Naive thymus-derived CD4-positive, alpha-beta T cell (primary cell): ENCODE measurements at regions of chr12 and their contacts with region 1.

Region 1: GRCh38 chr12:8078398-8078797 is 3.7 kb upstream of the NECAP1 start:
- DNase-seq: peak in 8 of 9 donors; percentile 36 to 82 (median 78)
- ATAC-seq: peak; percentile 45
- H3K4me3 ChIP-seq: no peak overlapping the region
- H3K4me3 Mint-ChIP-seq: peak overlapping the region in 6 of 10 donors; percentile 18 to 49 (median 30)
- H3K27ac ChIP-seq: peak overlapping the region; percentile 94
- H3K27ac Mint-ChIP-seq: peak overlapping the region in 8 of 9 donors; percentile 86 to 100 (median 98)
- H3K4me1 ChIP-seq: peaks cover 21 to 40% of the 10 kb centered on the region in 2 donors
- H3K4me1 Mint-ChIP-seq: peaks cover 19 to 63% (median 41%) of the 10 kb centered on the region in 7 donors
- H3K27me3 ChIP-seq: no peaks in the 10 kb centered on the region
- H3K27me3 Mint-ChIP-seq: peaks cover 0 to 2% (median 0%) of the 10 kb centered on the region in 5 donors

Region 2: GRCh38 chr12:7354529-7354928 is 723.9 kb before region 1 on chr12:
- CTCF ChIA-PET with region 1: no interaction called
- POLR2A ChIA-PET with region 1: no interaction called
- intact Hi-C with region 1: no loop called
- DNase-seq: no peak
- ATAC-seq: no peak
- H3K4me3 ChIP-seq: no peak overlapping the region
- H3K4me3 Mint-ChIP-seq: no peak overlapping the region
- H3K27ac ChIP-seq: no peak overlapping the region
- H3K27ac Mint-ChIP-seq: no peak overlapping the region
- H3K4me1 ChIP-seq: peaks cover 0 to 19% of the 10 kb centered on the region in 2 donors
- H3K4me1 Mint-ChIP-seq: peaks cover 0 to 6% (median 5%) of the 10 kb centered on the region in 7 donors
- H3K27me3 ChIP-seq: no peaks in the 10 kb centered on the region
- H3K27me3 Mint-ChIP-seq: peaks cover 9 to 31% (median 14%) of the 10 kb centered on the region in 5 donors

Region 3: GRCh38 chr12:7859552-7859951 is 218.8 kb before region 1 on chr12:
- CTCF ChIA-PET with region 1: interaction called, 12 read pairs
- POLR2A ChIA-PET with region 1: interaction called, 5 read pairs
- intact Hi-C with region 1: loop called (anchors 1 kb)
- DNase-seq: no peak
- ATAC-seq: no peak
- H3K4me3 ChIP-seq: no peak overlapping the region
- H3K4me3 Mint-ChIP-seq: no peak overlapping the region
- H3K27ac ChIP-seq: no peak overlapping the region
- H3K27ac Mint-ChIP-seq: peak overlapping the region in 2 of 9 donors; percentile 4 to 26
- H3K4me1 ChIP-seq: peaks cover 0 to 4% of the 10 kb centered on the region in 2 donors
- H3K4me1 Mint-ChIP-seq: peaks cover 0 to 18% (median 8%) of the 10 kb centered on the region in 7 donors
- H3K27me3 ChIP-seq: no peaks in the 10 kb centered on the region
- H3K27me3 Mint-ChIP-seq: peaks cover 0 to 18% (median 0%) of the 10 kb centered on the region in 5 donors

Region 4: DNA sequence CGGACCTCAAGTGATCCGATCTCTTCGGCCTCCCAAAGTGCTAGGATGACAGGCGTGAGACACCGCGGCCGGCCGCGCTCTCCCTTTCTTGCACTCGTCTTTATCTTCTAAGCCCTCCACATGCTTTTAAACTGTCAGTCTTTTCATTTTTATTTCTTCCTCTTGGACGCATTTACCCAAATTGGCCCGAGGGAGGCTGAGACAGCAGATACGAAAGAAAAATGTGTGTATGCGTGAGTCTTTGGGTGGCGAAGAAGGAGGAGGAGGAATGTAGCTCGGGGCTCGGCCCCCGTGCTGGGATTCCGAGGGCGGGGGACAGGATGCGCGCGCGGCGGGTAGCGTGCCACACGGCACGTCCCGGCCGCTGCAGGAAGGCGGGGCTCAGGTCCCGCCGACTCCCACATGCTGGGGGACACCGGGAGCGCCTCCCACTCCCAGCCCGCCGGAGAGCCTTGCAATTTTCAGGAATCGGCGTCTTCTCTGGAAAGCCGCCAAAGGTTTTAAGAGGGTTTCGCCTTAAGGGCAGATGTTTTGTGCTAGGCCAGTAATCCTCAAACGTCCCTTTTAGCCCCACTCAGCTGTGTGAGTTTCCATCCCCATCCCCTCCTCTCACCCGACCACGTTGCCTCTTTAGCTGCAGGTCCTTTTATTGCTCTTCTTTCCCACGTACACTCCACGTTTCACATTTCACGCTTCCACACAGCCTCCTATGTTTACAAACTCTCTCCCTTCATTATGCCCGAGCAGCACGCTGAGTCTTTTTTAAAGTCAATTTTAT is 107.7 kb before region 1 on chr12:
- CTCF ChIA-PET with region 1: interaction called, 3 read pairs
- POLR2A ChIA-PET with region 1: interaction called, 7 read pairs
- intact Hi-C with region 1: loop called in 1 of 2 experiments (anchors 1 kb)
- DNase-seq: peak; percentile 68 to 91 (median 85)
- ATAC-seq: peak; percentile 93
- H3K4me3 ChIP-seq: peak overlapping the region; percentile 75
- H3K4me3 Mint-ChIP-seq: peak overlapping the region; percentile 82 to 96 (median 90)
- H3K27ac ChIP-seq: peak overlapping the region; percentile 99
- H3K27ac Mint-ChIP-seq: peak overlapping the region; percentile 92 to 99 (median 98)
- H3K4me1 ChIP-seq: peaks cover 13 to 14% of the 10 kb centered on the region in 2 donors
- H3K4me1 Mint-ChIP-seq: peaks cover 17 to 37% (median 33%) of the 10 kb centered on the region in 7 donors
- H3K27me3 ChIP-seq: no peaks in the 10 kb centered on the region
- H3K27me3 Mint-ChIP-seq: no peaks in the 10 kb centered on the region

Region 5: GRCh38 chr12:8026291-8026900 is 52.0 kb before region 1 on chr12:
- CTCF ChIA-PET with region 1: interaction called, 9 read pairs
- POLR2A ChIA-PET with region 1: interaction called, 178 read pairs
- intact Hi-C with region 1: loop called (anchors 1 kb)
- DNase-seq: peak; percentile 74 to 99 (median 98)
- ATAC-seq: peak; percentile 96
- H3K4me3 ChIP-seq: peak overlapping the region; percentile 79
- H3K4me3 Mint-ChIP-seq: peak overlapping the region; percentile 89 to 100 (median 96)
- H3K27ac ChIP-seq: peak overlapping the region; percentile 99
- H3K27ac Mint-ChIP-seq: peak overlapping the region; percentile 96 to 100 (median 99)
- H3K4me1 ChIP-seq: peaks cover 5 to 8% of the 10 kb centered on the region in 2 donors
- H3K4me1 Mint-ChIP-seq: peaks cover 5 to 36% (median 13%) of the 10 kb centered on the region in 7 donors
- H3K27me3 ChIP-seq: no peaks in the 10 kb centered on the region
- H3K27me3 Mint-ChIP-seq: peaks cover 0 to 2% (median 0%) of the 10 kb centered on the region in 5 donors

Region 6: DNA sequence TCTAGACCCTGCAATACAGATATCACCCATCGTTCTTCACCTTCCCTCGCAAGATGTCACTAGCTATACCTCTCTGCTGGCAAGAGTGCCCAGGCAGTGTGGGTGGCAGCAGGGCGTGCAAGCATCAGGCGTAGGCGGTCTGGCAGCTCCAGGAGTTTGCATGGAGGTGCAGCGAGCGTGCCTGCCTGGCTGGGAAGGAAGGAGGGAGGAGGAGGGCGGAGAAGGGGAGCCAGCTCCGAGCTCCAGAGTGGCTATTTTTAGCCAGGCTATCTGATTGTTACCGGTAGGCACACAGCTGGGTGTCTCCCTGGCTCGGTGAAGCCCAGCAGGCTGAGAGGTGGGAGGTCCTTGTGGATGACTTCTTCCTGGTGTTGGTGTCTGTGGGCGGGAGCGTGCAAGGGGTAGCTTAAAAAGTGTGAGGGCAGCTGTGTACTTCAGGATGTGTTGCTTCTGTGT is 39.7 kb before region 1 on chr12:
- CTCF ChIA-PET with region 1: interaction called, 158 read pairs
- POLR2A ChIA-PET with region 1: interaction called, 178 read pairs
- intact Hi-C with region 1: no loop called
- DNase-seq: peak in 2 of 9 donors; percentile 20 to 22
- ATAC-seq: peak; percentile 74
- H3K4me3 ChIP-seq: peak overlapping the region; percentile 42
- H3K4me3 Mint-ChIP-seq: peak overlapping the region; percentile 67 to 90 (median 76)
- H3K27ac ChIP-seq: peak overlapping the region; percentile 62
- H3K27ac Mint-ChIP-seq: peak overlapping the region; percentile 2 to 95 (median 60)
- H3K4me1 ChIP-seq: peaks cover 43 to 58% of the 10 kb centered on the region in 2 donors
- H3K4me1 Mint-ChIP-seq: peaks cover 56 to 68% (median 62%) of the 10 kb centered on the region in 7 donors
- H3K27me3 ChIP-seq: no peaks in the 10 kb centered on the region
- H3K27me3 Mint-ChIP-seq: no peaks in the 10 kb centered on the region

Region 7: GRCh38 chr12:8065991-8066594 is 12.3 kb before region 1 on chr12 and contains the start of gene C3AR1:
- CTCF ChIA-PET with region 1: interaction called, 23 read pairs
- POLR2A ChIA-PET with region 1: interaction called, 13 read pairs
- intact Hi-C with region 1: loop called (anchors 1 kb)
- DNase-seq: peak in 8 of 9 donors; percentile 35 to 70 (median 67)
- ATAC-seq: peak; percentile 98
- H3K4me3 ChIP-seq: peak within 1 kb of the TSS; percentile 5
- H3K4me3 Mint-ChIP-seq: peak within 1 kb of the TSS; percentile 14 to 81 (median 48)
- H3K27ac ChIP-seq: peak within 1 kb of the TSS; percentile 61
- H3K27ac Mint-ChIP-seq: peak within 1 kb of the TSS; percentile 82 to 96 (median 90)
- H3K4me1 ChIP-seq: peaks cover 12 to 17% of the 10 kb centered on the region in 2 donors
- H3K4me1 Mint-ChIP-seq: peaks cover 17 to 33% (median 26%) of the 10 kb centered on the region in 7 donors
- H3K27me3 ChIP-seq: no peaks in the 10 kb centered on the region
- H3K27me3 Mint-ChIP-seq: no peaks in the 10 kb centered on the region
- total RNA-seq, gene C3AR1: 0.66 to 12.7 (median 3.0) TPM